Ascending aorta (tissue), 2 donors: ENCODE measurements at regions of chr6 and their contacts with region 1.

Region 1: GRCh38 chr6:74606581-74607071 is 599.2 kb downstream of the COL12A1 start:
- DNase-seq: peak in 1 of 2 donors; percentile 71
- H3K4me3 ChIP-seq: no peak overlapping the region
- H3K27ac ChIP-seq: peak overlapping the region; percentile 53 to 58
- H3K4me1 ChIP-seq: peaks cover 0 to 28% of the 10 kb centered on the region in 2 donors
- H3K27me3 ChIP-seq: no peaks in the 10 kb centered on the region
- CTCF ChIP-seq: no peak

Region 2: DNA sequence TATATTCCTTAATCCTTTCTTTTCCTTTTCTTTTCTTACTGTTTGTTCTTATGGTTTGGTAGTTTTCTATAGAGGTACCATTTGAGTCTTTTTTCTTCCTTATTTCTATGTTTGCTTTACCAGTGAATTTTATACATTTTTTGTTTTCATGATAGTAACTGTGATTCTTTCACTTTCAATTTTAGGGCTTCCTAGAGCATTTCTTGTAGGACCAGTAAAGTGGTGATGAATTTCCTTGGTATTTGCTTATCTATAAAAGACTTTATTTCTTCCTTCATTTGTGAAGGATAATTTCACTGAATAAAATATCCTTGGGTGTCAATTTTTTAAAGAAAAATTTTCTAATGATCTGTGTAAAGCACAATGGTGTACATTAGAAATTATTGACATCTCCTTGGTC is 273.2 kb before region 1 on chr6:
- intact Hi-C with region 1: no loop called
- DNase-seq: no peak
- H3K4me3 ChIP-seq: no peak overlapping the region
- H3K27ac ChIP-seq: no peak overlapping the region
- H3K4me1 ChIP-seq: no peaks in the 10 kb centered on the region
- H3K27me3 ChIP-seq: no peaks in the 10 kb centered on the region
- CTCF ChIP-seq: no peak

Region 3: DNA sequence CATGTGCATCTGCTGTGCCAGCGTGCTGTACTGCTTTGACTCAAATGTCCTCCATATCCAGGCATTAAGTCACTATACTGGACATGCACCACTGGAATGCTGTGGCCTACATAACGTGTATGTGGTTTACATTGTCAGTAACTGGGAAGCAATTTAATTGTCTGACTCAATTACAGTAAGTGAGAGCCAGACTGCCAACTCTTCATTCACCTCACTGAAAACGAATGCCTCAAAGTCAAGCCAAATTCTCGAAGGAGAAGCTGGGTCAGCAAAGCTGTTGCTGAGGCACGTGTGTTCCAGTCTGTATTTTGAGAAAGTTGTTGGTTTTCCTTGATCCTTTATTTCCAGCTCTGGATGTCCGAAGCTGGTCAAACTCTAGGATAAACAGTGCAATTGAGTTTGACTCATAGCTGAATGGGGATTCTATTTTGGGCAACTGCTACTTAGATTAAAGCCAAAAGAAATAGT is 65.0 kb after region 1 on chr6:
- intact Hi-C with region 1: loop called (anchors 2 kb)
- DNase-seq: peak in 1 of 2 donors; percentile 69
- H3K4me3 ChIP-seq: no peak overlapping the region
- H3K27ac ChIP-seq: peak overlapping the region; percentile 32 to 56
- H3K4me1 ChIP-seq: peaks cover 0 to 4% of the 10 kb centered on the region in 2 donors
- H3K27me3 ChIP-seq: no peaks in the 10 kb centered on the region
- CTCF ChIP-seq: no peak

Region 4: DNA sequence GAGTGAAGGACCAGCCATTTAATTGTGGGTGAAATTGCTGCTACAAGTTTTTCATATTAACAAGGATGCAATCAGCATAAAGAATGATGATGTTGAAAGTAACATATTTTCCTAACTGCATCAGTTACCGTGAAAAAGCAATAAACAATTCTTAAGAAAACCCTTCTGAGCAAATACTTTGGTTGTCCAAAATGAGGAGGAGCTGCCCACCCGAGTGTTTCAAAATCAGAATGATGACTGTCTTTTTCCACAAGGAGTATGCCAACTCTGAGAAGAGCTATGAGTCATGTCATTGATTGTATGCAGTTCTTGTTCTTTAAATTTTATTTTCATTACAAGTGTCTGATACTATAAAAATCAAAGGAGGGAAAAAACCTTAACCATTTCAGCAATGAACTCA is 128.7 kb after region 1 on chr6:
- intact Hi-C with region 1: loop called (anchors 2 kb)
- DNase-seq: peak in 1 of 2 donors; percentile 70
- H3K4me3 ChIP-seq: no peak overlapping the region
- H3K27ac ChIP-seq: peak overlapping the region in 1 of 2 donors; percentile 59
- H3K4me1 ChIP-seq: no peaks in the 10 kb centered on the region
- H3K27me3 ChIP-seq: no peaks in the 10 kb centered on the region
- CTCF ChIP-seq: no peak

Region 5: GRCh38 chr6:74939151-74939708 is 332.6 kb after region 1 on chr6:
- intact Hi-C with region 1: loop called (anchors 10 kb)
- DNase-seq: no peak
- H3K4me3 ChIP-seq: no peak overlapping the region
- H3K27ac ChIP-seq: no peak overlapping the region
- H3K4me1 ChIP-seq: no peaks in the 10 kb centered on the region
- H3K27me3 ChIP-seq: no peaks in the 10 kb centered on the region
- CTCF ChIP-seq: no peak